Activated naive CD4-positive, alpha-beta T cell treated with anti-CD3 and anti-CD28 coated beads for 36 hours (primary cell): ENCODE measurements at regions of chr18 and their contacts with region 1.

Region 1: GRCh38 chr18:46148810-46149209 is 44.6 kb downstream of the HAUS1 start:
- DNase-seq: peak; percentile 70
- H3K4me3 Mint-ChIP-seq: no peak overlapping the region
- H3K27ac Mint-ChIP-seq: peak overlapping the region; percentile 39
- H3K4me1 Mint-ChIP-seq: peaks cover 31% of the 10 kb centered on the region
- H3K27me3 Mint-ChIP-seq: no peaks in the 10 kb centered on the region

Region 2: DNA sequence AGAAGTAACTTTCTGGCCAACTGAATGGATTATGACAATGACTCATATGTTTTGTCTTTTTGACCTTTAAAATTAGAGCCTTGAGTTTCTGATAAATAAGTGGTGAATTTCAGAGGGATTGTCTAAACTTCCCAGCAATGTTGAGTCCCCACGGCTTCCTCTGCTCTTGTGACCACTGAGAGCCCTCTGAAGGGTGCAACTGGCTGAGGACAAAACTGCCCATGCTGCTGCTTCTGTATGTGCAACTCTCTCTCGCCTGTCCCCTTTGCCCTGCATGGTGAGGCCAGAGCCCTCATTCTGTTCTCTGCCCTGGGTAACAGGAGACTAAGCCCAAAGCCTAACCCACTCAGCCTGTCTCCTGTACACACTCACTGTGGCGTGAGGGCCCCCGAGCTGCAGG is 477.5 kb before region 1 on chr18:
- CTCF ChIA-PET with region 1: no interaction called
- intact Hi-C with region 1: no loop called
- DNase-seq: no peak
- H3K4me3 Mint-ChIP-seq: no peak overlapping the region
- H3K27ac Mint-ChIP-seq: no peak overlapping the region
- H3K4me1 Mint-ChIP-seq: peaks cover 53% of the 10 kb centered on the region
- H3K27me3 Mint-ChIP-seq: no peaks in the 10 kb centered on the region

Region 3: DNA sequence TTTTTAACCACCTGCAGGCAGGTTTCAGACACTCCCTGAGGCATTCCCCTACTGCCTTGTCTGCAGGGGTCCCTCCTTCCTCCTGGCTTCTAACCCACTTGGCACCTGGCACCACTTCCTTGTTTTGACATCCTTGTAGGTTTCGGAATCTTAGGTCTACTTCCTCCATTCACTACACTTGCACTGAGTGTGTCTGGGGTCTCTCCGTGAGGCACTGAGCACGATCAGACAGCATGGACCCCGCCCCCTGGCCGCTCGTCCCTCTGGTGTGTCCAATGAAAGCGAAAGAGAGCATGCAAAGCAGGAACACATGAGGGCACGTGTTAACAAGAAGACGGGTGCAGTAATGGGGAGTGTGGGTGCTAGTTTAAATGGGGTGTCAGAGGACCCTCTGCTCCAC is 19.2 kb after region 1 on chr18:
- CTCF ChIA-PET with region 1: interaction called, 29 read pairs
- intact Hi-C with region 1: loop called (anchors 1 kb)
- DNase-seq: peak; percentile 31
- H3K4me3 Mint-ChIP-seq: peak overlapping the region; percentile 45
- H3K27ac Mint-ChIP-seq: no peak overlapping the region
- H3K4me1 Mint-ChIP-seq: peaks cover 24% of the 10 kb centered on the region
- H3K27me3 Mint-ChIP-seq: no peaks in the 10 kb centered on the region

Region 4: GRCh38 chr18:46213295-46213694 is 64.5 kb after region 1 on chr18:
- CTCF ChIA-PET with region 1: interaction called, 18 read pairs
- intact Hi-C with region 1: loop called (anchors 1 kb)
- DNase-seq: no peak
- H3K4me3 Mint-ChIP-seq: no peak overlapping the region
- H3K27ac Mint-ChIP-seq: no peak overlapping the region
- H3K4me1 Mint-ChIP-seq: peaks cover 76% of the 10 kb centered on the region
- H3K27me3 Mint-ChIP-seq: no peaks in the 10 kb centered on the region

Region 5: GRCh38 chr18:46281185-46282176 is 132.7 kb after region 1 on chr18:
- CTCF ChIA-PET with region 1: interaction called, 13 read pairs
- intact Hi-C with region 1: no loop called
- DNase-seq: peak; percentile 78
- H3K4me3 Mint-ChIP-seq: no peak overlapping the region
- H3K27ac Mint-ChIP-seq: no peak overlapping the region
- H3K4me1 Mint-ChIP-seq: peaks cover 5% of the 10 kb centered on the region
- H3K27me3 Mint-ChIP-seq: no peaks in the 10 kb centered on the region

Region 6: GRCh38 chr18:46481048-46481846 is 332.4 kb after region 1 on chr18:
- CTCF ChIA-PET with region 1: interaction called, 6 read pairs
- intact Hi-C with region 1: loop called (anchors 2 kb)
- DNase-seq: peak; percentile 68
- H3K4me3 Mint-ChIP-seq: no peak overlapping the region
- H3K27ac Mint-ChIP-seq: no peak overlapping the region
- H3K4me1 Mint-ChIP-seq: no peaks in the 10 kb centered on the region
- H3K27me3 Mint-ChIP-seq: no peaks in the 10 kb centered on the region

Region 7: DNA sequence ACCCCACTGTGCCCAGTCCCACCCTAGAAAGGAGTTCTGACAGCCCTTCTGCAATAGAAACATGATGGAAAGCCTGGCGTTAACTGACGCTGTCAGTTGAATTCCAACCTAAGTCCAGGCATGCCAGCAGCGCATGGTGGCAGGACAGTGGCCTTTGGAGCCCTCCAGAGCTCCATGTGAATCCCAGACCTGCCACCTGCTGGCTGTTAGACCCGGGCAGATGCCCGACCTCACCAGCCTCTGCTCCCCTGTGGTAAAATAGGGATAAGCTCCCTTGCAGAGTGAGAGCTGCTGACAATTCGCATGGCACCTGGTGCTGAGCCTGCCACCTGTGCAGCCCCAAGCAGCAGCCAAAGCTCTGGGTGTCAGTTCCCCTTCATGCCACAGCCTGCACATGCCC is 369.6 kb after region 1 on chr18:
- CTCF ChIA-PET with region 1: no interaction called
- intact Hi-C with region 1: loop called (anchors 1 kb)
- DNase-seq: no peak
- H3K4me3 Mint-ChIP-seq: no peak overlapping the region
- H3K27ac Mint-ChIP-seq: no peak overlapping the region
- H3K4me1 Mint-ChIP-seq: no peaks in the 10 kb centered on the region
- H3K27me3 Mint-ChIP-seq: peaks cover 3% of the 10 kb centered on the region

Region 8: DNA sequence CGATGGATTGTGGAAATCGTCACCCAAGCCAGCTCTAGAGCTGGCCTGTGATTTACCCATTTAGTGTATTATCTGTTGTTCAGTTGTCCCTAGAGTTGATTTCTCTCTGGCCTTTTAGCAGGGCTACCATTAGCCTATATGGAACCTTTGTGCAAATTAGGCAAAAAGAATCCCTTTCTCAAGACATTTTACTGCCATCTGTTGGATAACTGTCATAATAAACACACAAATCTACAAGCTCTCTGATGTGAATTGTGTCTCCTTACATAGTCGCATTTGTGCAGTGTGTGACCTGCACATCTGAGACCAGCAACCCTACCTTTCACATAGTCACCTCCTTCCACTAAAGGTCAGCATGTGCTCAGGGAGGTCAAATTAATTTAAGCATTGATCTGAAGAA is 474.2 kb after region 1 on chr18:
- CTCF ChIA-PET with region 1: interaction called, 6 read pairs
- intact Hi-C with region 1: loop called (anchors 1 kb)
- DNase-seq: no peak
- H3K4me3 Mint-ChIP-seq: no peak overlapping the region
- H3K27ac Mint-ChIP-seq: peak overlapping the region; percentile 71
- H3K4me1 Mint-ChIP-seq: peaks cover 27% of the 10 kb centered on the region
- H3K27me3 Mint-ChIP-seq: no peaks in the 10 kb centered on the region